SK-N-SH (cell line): ENCODE measurements at regions of chr17 and their contacts with region 1.

Region 1: GRCh38 chr17:64320613-64321553 is 57.8 kb upstream of the TEX2 start:
- DNase-seq: peak; percentile 88
- H3K4me3 ChIP-seq: no peak overlapping the region
- H3K27ac ChIP-seq: no peak overlapping the region
- H3K4me1 ChIP-seq: no peaks in the 10 kb centered on the region
- H3K27me3 ChIP-seq: no peaks in the 10 kb centered on the region
- CTCF ChIP-seq: peak; percentile 97
- EP300 ChIP-seq: no peak
- RAD21 ChIP-seq: peak; percentile 87

Region 2: DNA sequence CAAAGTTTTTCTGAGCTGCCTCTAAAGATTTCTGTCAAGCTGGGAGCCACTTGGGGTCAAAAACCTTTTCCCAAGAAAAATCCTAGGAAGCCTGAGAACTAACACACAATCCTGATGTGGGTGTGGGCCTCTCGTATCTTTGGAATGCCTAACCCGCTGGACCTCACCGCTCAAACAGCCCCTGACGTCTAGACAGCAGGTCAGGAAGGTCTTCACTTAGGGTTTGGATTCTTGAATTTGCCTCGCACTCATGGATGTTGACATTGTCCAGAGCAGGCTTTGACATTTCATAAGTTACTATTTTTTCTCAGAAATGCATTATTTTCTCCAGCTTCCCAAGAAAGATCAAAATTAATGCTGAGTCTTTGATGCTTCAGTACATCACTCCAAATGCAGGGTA is 76.7 kb before region 1 on chr17:
- CTCF ChIA-PET with region 1: no interaction called
- POLR2A ChIA-PET with region 1: no interaction called
- DNase-seq: no peak
- H3K4me3 ChIP-seq: no peak overlapping the region
- H3K27ac ChIP-seq: peak overlapping the region; percentile 54 to 89
- H3K4me1 ChIP-seq: peaks cover 36 to 44% of the 10 kb centered on the region in 2 experiments
- H3K27me3 ChIP-seq: no peaks in the 10 kb centered on the region
- CTCF ChIP-seq: no peak
- EP300 ChIP-seq: peak in 1 of 2 experiments; percentile 41; a peak in 1 of 4 replicates
- RAD21 ChIP-seq: no peak

Region 3: GRCh38 chr17:64306850-64307463 is 13.9 kb before region 1 on chr17:
- CTCF ChIA-PET with region 1: interaction called, 28 read pairs
- POLR2A ChIA-PET with region 1: no interaction called
- DNase-seq: peak; percentile 72
- H3K4me3 ChIP-seq: peak overlapping the region in 1 of 2 experiments; percentile 13; a peak in 1 of 4 replicates
- H3K27ac ChIP-seq: no peak overlapping the region
- H3K4me1 ChIP-seq: no peaks in the 10 kb centered on the region
- H3K27me3 ChIP-seq: no peaks in the 10 kb centered on the region
- CTCF ChIP-seq: peak; percentile 99
- EP300 ChIP-seq: no peak
- RAD21 ChIP-seq: peak; percentile 71

Region 4: DNA sequence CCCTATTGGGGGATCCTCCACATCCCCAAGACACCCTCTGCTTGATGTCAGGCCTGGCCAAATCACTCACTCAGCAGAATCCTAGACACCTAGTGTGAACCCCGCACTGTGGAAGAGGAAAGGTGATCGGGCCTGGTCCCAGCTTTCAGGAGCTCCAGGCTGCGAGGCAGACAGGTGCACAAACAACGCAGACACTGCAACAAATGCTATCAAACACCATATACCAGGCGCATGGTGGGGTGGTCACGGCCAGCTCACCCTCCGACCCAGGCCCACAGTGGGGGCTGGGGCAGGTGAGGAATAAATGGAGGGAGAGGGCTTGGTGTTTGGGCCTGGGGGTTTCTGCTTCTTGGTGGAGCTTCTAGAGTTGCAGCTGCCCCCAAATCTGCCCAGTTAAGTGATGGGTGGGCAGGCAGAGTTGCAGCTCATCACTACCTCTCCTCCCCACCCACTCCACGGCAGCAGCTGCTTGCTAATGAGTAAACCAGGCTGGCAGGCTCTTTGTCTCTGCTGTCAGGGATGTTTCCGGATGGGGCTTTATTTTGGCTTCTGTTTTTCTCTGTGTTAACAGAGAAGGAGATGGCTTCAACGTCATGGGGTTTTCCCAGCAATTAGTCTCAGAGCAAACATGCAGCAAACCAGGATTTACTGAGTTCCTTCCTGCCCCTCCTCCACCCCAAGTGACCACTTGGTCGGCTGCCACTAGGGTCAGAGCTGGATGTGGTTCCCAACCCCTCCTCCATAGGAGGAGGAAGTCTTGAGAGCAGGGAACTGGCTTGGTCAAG is 23.2 kb after region 1 on chr17:
- CTCF ChIA-PET with region 1: interaction called, 24 read pairs
- POLR2A ChIA-PET with region 1: no interaction called
- DNase-seq: no peak
- H3K4me3 ChIP-seq: no peak overlapping the region
- H3K27ac ChIP-seq: peak overlapping the region in 1 of 2 experiments; percentile 11; a peak in 1 of 4 replicates
- H3K4me1 ChIP-seq: peaks cover 8 to 10% of the 10 kb centered on the region in 2 experiments; a peak in 3 of 4 replicates
- H3K27me3 ChIP-seq: no peaks in the 10 kb centered on the region
- CTCF ChIP-seq: no peak
- EP300 ChIP-seq: peak in 1 of 2 experiments; percentile 16; a peak in 1 of 4 replicates
- RAD21 ChIP-seq: no peak

Region 5: DNA sequence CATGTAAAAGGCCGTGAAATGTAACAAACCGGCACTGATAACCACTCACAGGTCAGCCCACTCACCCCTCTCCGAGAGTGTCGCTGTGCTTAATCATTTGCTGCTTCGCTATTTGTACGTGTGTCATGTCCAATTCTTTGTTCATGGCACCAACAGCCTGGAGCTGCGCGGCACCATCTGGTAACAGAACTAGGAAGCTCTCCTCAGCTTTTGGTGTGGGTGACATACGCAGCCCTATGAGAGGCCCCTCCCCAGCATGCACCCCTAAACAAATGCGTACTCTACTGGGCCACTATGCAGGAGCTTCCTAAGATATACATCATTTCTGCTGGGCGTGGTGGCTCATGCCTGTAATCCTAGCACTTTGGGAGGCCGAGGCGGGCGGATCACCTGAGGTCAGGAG is 72.1 kb after region 1 on chr17:
- CTCF ChIA-PET with region 1: interaction called, 11 read pairs
- POLR2A ChIA-PET with region 1: no interaction called
- DNase-seq: no peak
- H3K4me3 ChIP-seq: no peak overlapping the region
- H3K27ac ChIP-seq: no peak overlapping the region
- H3K4me1 ChIP-seq: no peaks in the 10 kb centered on the region
- H3K27me3 ChIP-seq: no peaks in the 10 kb centered on the region
- CTCF ChIP-seq: no peak
- EP300 ChIP-seq: no peak
- RAD21 ChIP-seq: no peak

Region 6: DNA sequence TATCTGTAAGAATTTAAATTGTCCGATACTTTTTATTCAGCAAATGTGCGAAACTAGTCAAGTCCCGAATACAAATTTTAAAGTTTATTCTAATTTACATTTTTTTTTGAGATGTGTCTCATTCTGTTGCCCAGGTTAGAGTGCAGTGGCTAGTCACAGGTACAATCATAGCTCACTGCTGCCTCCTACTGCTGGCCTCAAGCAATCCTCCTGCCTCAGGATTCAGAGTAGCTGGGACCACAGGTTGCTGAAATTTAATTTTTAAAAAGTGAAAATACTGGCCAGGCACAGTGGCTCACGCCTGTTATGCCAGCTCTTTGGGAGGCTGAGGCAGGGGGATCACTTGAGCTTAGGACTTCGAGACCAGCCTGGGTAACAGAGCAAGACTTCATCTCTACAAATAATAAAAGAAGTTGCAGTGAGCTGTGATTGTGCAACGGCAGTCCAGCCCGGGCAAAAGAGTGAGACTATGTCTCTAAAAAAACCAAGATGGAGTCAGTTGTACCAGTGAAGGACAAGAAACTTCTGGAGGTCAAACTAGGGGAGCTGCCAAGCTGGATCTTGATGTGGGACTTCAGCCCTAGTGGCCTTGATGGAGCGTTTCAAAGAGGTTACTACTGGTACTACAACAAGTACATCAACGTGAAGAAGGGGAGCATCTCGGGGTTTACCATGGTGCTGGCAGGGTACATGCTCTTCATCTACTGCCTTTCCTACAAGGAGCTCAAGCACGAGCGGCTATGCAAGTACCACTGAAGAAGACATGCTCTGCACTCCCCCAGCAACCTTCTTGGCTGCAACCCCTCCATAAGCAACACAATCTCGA is 170.4 kb after region 1 on chr17:
- CTCF ChIA-PET with region 1: interaction called, 10 read pairs
- POLR2A ChIA-PET with region 1: no interaction called
- DNase-seq: no peak
- H3K4me3 ChIP-seq: no peak overlapping the region
- H3K27ac ChIP-seq: no peak overlapping the region; a peak in 1 of 4 replicates
- H3K4me1 ChIP-seq: peaks cover 4 to 9% of the 10 kb centered on the region in 2 experiments; a peak in 3 of 4 replicates
- H3K27me3 ChIP-seq: no peaks in the 10 kb centered on the region
- CTCF ChIP-seq: peak; percentile 92
- EP300 ChIP-seq: no peak
- RAD21 ChIP-seq: peak; percentile 61